WTC11 (cell line): ENCODE measurements at regions of chr1 and their contacts with region 1.

Region 1: GRCh38 chr1:112803906-112804762 is 89.0 kb upstream of the PPM1J start:
- DNase-seq: peak; percentile 85
- ATAC-seq: peak; percentile 93
- H3K4me3 Mint-ChIP-seq: no peak overlapping the region
- H3K27ac Mint-ChIP-seq: no peak overlapping the region; the same call in 1 of the 2 replicates
- H3K4me1 Mint-ChIP-seq: peaks cover 49% of the 10 kb centered on the region
- H3K27me3 Mint-ChIP-seq: peaks cover 29% of the 10 kb centered on the region
- CTCF ChIP-seq: peak; percentile 50

Region 2: DNA sequence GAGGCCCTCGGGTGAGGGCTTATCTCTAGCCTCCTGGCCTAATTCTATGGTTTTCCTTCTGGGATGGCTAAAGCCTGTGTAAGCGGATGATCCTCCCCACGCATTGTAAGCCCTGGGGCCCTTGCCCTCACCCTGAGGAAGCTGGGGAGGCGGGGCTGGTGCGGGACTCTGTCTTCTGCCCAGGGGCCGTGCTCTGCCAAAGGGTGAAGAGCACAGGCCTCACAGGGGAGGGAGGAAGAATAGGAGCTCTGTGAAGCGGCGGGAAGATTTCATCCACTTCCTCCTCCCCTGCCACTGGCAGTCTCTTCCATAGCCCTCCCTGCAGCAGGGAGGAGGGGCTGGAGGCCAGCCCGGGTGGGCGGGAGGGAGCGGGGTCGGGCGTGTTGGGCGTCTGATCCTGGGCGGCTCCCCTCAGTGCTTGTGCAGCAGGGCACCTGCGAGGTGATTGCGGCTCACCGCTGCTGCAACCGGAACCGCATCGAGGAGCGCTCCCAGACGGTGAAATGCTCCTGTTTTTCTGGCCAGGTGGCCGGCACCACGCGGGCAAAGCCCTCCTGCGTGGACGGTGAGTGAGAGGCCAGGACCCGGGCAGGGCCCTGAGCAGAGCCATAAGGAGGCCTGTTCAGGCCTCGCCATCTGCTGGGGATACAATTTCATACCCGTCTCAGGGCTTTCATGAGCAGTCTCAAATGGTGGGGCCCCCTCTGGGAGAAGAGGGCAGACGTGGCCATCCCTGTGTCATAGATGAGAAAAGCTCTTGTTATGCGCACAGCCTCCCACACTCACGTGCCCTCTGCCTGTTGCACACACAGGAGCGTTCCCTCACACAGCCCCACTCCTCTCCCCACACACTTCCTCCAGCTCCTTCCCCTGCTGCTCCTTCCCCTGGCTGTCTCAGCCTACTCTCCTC is 81.3 kb before region 1 on chr1:
- CTCF ChIA-PET with region 1: interaction called, 373 read pairs
- POLR2A ChIA-PET with region 1: interaction called, 3 read pairs
- DNase-seq: peak; percentile 58
- ATAC-seq: peak; percentile 62
- H3K4me3 Mint-ChIP-seq: peak overlapping the region; percentile 67
- H3K27ac Mint-ChIP-seq: no peak overlapping the region
- H3K4me1 Mint-ChIP-seq: peaks cover 18% of the 10 kb centered on the region
- H3K27me3 Mint-ChIP-seq: peaks cover 55% of the 10 kb centered on the region
- CTCF ChIP-seq: no peak

Region 3: GRCh38 chr1:112735752-112736151 is 68.4 kb before region 1 on chr1:
- CTCF ChIA-PET with region 1: interaction called, 14 read pairs
- POLR2A ChIA-PET with region 1: no interaction called
- DNase-seq: no peak
- ATAC-seq: no peak
- H3K4me3 Mint-ChIP-seq: no peak overlapping the region
- H3K27ac Mint-ChIP-seq: no peak overlapping the region
- H3K4me1 Mint-ChIP-seq: 0 out of 2 replicates have a peak, but pooled peaks cover 3% of the 10 kb centered on the region
- H3K27me3 Mint-ChIP-seq: peaks cover 27% of the 10 kb centered on the region
- CTCF ChIP-seq: no peak

Region 4: GRCh38 chr1:112744009-112744578 is 60.0 kb before region 1 on chr1:
- CTCF ChIA-PET with region 1: interaction called, 34 read pairs
- POLR2A ChIA-PET with region 1: no interaction called
- DNase-seq: peak; percentile 69
- ATAC-seq: peak; percentile 81
- H3K4me3 Mint-ChIP-seq: peak overlapping the region; percentile 57
- H3K27ac Mint-ChIP-seq: no peak overlapping the region
- H3K4me1 Mint-ChIP-seq: peaks cover 8% of the 10 kb centered on the region
- H3K27me3 Mint-ChIP-seq: peaks cover 82% of the 10 kb centered on the region
- CTCF ChIP-seq: no peak

Region 5: GRCh38 chr1:112868191-112868590 is 64.1 kb after region 1 on chr1:
- CTCF ChIA-PET with region 1: interaction called, 11 read pairs
- POLR2A ChIA-PET with region 1: no interaction called
- DNase-seq: no peak
- ATAC-seq: no peak
- H3K4me3 Mint-ChIP-seq: no peak overlapping the region
- H3K27ac Mint-ChIP-seq: no peak overlapping the region
- H3K4me1 Mint-ChIP-seq: peaks cover 35% of the 10 kb centered on the region
- H3K27me3 Mint-ChIP-seq: no peaks in the 10 kb centered on the region
- CTCF ChIP-seq: no peak

Region 6: DNA sequence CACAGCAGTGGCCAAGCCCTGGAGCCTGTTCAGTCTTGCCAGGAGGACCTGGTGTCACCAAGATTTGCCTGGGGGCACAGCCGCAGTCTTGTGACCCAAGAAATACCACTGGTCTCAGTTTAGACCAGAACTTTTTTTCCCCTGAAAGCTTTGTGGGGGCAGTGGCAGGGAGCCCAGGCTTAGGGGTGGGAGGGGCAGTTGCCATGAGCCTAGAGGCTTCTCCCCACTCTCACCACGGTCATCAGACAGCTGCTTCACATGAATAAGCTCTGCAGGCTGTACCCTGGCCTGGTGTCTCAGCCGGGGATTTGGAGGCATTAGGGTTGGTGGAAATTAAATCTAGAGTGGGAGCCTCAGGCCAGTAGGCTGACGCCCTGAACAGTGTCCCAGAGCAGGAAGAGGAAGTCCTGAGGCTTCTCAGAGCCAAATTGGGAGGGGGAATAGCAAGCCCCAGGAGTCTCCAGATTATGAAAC is 78.2 kb after region 1 on chr1:
- CTCF ChIA-PET with region 1: interaction called, 20 read pairs
- POLR2A ChIA-PET with region 1: no interaction called
- DNase-seq: no peak
- ATAC-seq: no peak
- H3K4me3 Mint-ChIP-seq: no peak overlapping the region
- H3K27ac Mint-ChIP-seq: no peak overlapping the region
- H3K4me1 Mint-ChIP-seq: peaks cover 53% of the 10 kb centered on the region
- H3K27me3 Mint-ChIP-seq: no peaks in the 10 kb centered on the region
- CTCF ChIP-seq: no peak